Transverse colon (tissue), 4 donors: ENCODE measurements at regions of chr7 and their contacts with region 1.

Region 1: GRCh38 chr7:39894904-39895303 is 55.2 kb upstream of the CDK13 start:
- DNase-seq: no peak
- H3K4me3 ChIP-seq: no peak overlapping the region
- H3K27ac ChIP-seq: no peak overlapping the region
- H3K4me1 ChIP-seq: peaks cover 0 to 6% (median 0%) of the 10 kb centered on the region in 4 donors
- H3K27me3 ChIP-seq: no peaks in the 10 kb centered on the region
- CTCF ChIP-seq: no peak
- EP300 ChIP-seq: no peak
- POLR2A ChIP-seq: no peak

Region 2: GRCh38 chr7:39838326-39838725 is 56.6 kb before region 1 on chr7:
- in situ Hi-C with region 1: no loop called
- intact Hi-C with region 1: no loop called
- DNase-seq: peak; percentile 26
- H3K4me3 ChIP-seq: no peak overlapping the region
- H3K27ac ChIP-seq: no peak overlapping the region
- H3K4me1 ChIP-seq: peaks cover 0 to 6% (median 3%) of the 10 kb centered on the region in 4 donors
- H3K27me3 ChIP-seq: peaks cover 5% of the 10 kb centered on the region
- CTCF ChIP-seq: no peak
- EP300 ChIP-seq: no peak
- POLR2A ChIP-seq: no peak

Region 3: DNA sequence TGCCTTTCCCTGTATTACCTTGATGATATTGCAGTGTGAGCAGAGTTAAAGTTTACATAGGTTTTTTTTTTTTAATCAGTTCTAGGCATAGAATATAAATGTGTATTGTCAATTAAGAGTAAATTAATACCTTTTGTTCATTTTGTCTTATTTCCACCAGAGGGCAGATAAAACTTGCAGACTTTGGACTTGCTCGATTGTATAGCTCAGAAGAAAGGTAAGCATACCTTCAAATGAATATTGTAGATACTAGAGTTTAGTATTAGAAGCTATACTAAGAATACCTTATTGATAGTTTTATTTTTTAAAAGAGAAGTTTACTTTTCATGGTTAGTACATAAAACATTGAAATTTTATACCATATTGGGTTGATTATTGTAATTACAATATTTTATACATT is 152.8 kb after region 1 on chr7:
- in situ Hi-C with region 1: loop called (anchors 5 to 25 kb)
- intact Hi-C with region 1: no loop called
- DNase-seq: no peak
- H3K4me3 ChIP-seq: no peak overlapping the region
- H3K27ac ChIP-seq: no peak overlapping the region
- H3K4me1 ChIP-seq: no peaks in the 10 kb centered on the region
- H3K27me3 ChIP-seq: no peaks in the 10 kb centered on the region
- CTCF ChIP-seq: peak in 1 of 5 experiments; percentile 17
- EP300 ChIP-seq: no peak
- POLR2A ChIP-seq: no peak